Endothelial cell of umbilical vein (primary cell): ENCODE measurements at regions of chr2 and their contacts with region 1.

Region 1: GRCh38 chr2:26982102-26982742 is 11.8 kb downstream of the MAPRE3 start:
- DNase-seq: peak; percentile 72
- H3K4me3 ChIP-seq: no peak overlapping the region
- H3K27ac ChIP-seq: no peak overlapping the region
- H3K4me1 ChIP-seq: no peaks in the 10 kb centered on the region
- H3K27me3 ChIP-seq: peaks cover 6 to 7% of the 10 kb centered on the region in 2 experiments
- CTCF ChIP-seq: peak; percentile 21 to 50
- POLR2A ChIP-seq: no peak

Region 2: DNA sequence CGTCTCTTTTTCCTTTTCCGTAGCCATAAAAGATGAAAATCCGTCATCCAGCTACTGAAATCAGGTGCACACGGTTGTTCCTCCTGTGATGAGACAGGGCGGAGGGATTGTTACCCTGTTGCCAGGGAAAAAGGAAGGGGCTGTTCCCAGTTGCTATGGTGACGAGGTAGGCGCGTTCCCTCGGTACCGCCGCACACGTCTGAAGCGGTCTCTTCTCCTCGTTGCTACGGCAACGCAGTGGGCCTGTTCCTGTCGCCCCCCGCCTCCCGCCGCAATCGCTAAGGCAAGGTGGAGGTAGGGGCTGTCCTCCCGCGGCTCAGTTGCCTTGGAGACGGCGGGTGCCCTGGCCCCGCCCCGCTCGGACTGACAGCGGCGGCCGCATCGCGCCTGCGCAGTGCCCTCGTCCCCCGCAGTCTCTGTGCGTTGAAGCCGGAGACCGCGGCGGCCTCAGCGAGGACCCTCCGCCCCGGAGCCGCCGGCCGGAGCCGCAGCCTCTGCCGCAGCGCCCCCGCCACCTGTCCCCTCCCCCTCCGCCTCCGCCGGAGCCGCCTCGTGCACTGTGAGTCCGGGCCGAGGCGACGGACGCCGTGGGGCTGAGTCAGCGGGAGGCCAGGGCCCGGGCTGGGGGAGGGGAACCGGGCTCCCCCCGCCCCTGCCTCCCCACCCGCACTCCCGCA is 11.8 kb before region 1 on chr2 and contains the start of gene MAPRE3:
- CTCF ChIA-PET with region 1: interaction called, 13 read pairs
- POLR2A ChIA-PET with region 1: no interaction called
- dilution Hi-C with region 1: no loop called
- intact Hi-C with region 1: no loop called
- DNase-seq: peak; percentile 85
- H3K4me3 ChIP-seq: peak within 1 kb of the TSS in 2 of 3 experiments; percentile 29 to 75
- H3K27ac ChIP-seq: no peak within 1 kb of the TSS
- H3K4me1 ChIP-seq: peaks cover 2% of the 10 kb centered on the region
- H3K27me3 ChIP-seq: peaks cover 20 to 23% of the 10 kb centered on the region in 2 experiments
- CTCF ChIP-seq: no peak
- POLR2A ChIP-seq: no peak
- total RNA-seq, gene MAPRE3: 5.0 and 6.1 TPM in 2 replicates

Region 3: DNA sequence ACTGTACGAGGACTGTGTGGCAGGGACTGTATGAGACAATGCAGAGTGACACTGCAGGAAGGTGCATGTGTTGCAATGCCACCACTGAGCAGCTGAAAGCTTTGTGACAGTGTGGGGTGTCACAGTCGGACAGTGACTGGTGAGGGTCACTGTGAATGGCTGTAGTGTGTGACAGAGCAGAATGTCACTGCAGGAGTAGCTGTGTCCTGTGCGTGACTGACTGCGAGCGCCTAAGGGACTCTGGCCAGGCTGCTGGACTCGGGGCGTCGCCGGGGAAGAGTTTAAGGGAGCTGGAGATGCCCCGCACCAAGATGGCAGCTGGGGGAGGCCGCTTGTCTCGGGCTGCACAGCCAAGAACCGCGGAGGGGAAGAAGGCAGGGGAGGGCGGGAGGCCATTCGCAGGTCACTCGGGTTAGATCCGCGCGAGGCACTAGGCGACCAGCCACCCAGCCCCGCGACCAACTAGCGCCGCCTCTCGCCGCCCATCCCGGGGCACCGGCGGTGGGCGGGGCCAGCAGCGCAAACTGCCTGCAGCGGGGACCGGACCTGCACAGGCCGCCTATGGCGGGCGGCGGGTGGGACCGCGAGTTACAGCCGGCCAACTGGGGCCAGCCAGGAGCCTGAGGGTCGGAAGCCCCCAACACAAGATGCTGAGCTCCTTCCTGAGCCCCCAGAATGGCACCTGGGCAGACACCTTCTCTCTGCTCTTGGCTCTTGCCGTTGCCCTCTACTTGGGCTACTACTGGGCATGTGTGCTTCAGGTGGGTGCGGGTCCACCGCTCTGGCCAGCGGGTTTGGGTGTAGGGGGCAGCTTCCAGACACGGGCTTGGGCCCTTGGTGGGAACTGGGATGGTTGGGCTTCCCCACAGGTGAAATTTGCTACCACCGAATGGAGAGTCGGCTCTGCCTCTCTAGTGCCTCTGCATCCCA is 141.3 kb after region 1 on chr2 and contains the start of gene ABHD1:
- CTCF ChIA-PET with region 1: no interaction called
- POLR2A ChIA-PET with region 1: no interaction called
- dilution Hi-C with region 1: no loop called
- intact Hi-C with region 1: no loop called
- DNase-seq: peak; percentile 48
- H3K4me3 ChIP-seq: peak within 1 kb of the TSS in 2 of 3 experiments; percentile 16 to 58
- H3K27ac ChIP-seq: no peak within 1 kb of the TSS
- H3K4me1 ChIP-seq: no peaks in the 10 kb centered on the region
- H3K27me3 ChIP-seq: peaks cover 8 to 20% of the 10 kb centered on the region in 2 experiments
- CTCF ChIP-seq: no peak
- POLR2A ChIP-seq: peak; percentile 31
- total RNA-seq, gene ABHD1: not detected in 2 replicates

Region 4: DNA sequence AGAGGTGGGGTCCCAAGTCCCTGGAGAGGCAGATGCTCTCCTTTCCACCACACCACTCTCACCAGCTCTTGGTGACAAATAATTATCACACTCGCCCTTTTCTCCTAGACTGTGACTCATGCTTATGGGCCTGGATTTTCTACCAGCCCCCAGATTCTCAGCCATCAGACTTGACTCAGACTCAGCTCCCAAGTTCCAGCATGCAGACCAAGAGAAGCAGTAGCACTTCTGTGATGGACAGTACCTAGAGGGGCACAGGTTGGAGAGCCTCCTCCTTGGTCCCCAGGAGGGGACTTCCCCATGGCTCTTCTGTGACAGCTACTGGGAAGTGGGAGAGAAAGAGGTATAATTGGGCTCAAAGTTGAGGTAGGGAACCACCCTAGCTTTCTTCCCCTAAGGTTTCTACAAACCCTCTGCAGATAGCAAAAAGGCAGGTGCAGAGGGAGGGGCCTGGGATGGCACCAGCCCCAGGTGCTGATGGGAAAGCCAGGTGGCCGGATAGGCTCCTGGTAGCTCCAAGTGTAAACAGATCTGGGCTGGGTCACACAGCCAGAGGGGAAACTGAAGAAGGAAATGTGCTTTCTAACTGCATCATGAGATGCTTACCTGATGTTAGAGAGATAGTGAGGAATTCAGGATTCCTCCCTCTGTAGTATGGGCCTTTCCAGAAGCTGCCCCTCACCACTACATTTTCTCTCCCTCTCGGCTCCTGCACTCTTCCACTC is 170.7 kb after region 1 on chr2:
- CTCF ChIA-PET with region 1: no interaction called
- POLR2A ChIA-PET with region 1: no interaction called
- dilution Hi-C with region 1: no loop called
- intact Hi-C with region 1: loop called (anchors 10 kb)
- DNase-seq: no peak
- H3K4me3 ChIP-seq: no peak overlapping the region
- H3K27ac ChIP-seq: no peak overlapping the region
- H3K4me1 ChIP-seq: no peaks in the 10 kb centered on the region
- H3K27me3 ChIP-seq: no peaks in the 10 kb centered on the region
- CTCF ChIP-seq: no peak
- POLR2A ChIP-seq: no peak

Region 5: GRCh38 chr2:27211829-27212627 is 229.8 kb after region 1 on chr2 and contains the starts of genes ATRAID and SLC5A6:
- CTCF ChIA-PET with region 1: no interaction called
- POLR2A ChIA-PET with region 1: no interaction called
- dilution Hi-C with region 1: no loop called
- intact Hi-C with region 1: no loop called
- DNase-seq: peak; percentile 92
- H3K4me3 ChIP-seq: peak within 1 kb of the TSS; percentile 68 to 91 (median 88)
- H3K27ac ChIP-seq: peak within 1 kb of the TSS; percentile 89
- H3K4me1 ChIP-seq: peaks cover 17% of the 10 kb centered on the region
- H3K27me3 ChIP-seq: no peaks in the 10 kb centered on the region
- CTCF ChIP-seq: no peak
- POLR2A ChIP-seq: peak; percentile 98
- total RNA-seq, gene ATRAID: 84.3 and 86.6 TPM in 2 replicates
- total RNA-seq, gene SLC5A6: 42.7 and 52.0 TPM in 2 replicates